ENCODE measurements at regions of chr15 and their contacts with region 1.

Region 1: DNA sequence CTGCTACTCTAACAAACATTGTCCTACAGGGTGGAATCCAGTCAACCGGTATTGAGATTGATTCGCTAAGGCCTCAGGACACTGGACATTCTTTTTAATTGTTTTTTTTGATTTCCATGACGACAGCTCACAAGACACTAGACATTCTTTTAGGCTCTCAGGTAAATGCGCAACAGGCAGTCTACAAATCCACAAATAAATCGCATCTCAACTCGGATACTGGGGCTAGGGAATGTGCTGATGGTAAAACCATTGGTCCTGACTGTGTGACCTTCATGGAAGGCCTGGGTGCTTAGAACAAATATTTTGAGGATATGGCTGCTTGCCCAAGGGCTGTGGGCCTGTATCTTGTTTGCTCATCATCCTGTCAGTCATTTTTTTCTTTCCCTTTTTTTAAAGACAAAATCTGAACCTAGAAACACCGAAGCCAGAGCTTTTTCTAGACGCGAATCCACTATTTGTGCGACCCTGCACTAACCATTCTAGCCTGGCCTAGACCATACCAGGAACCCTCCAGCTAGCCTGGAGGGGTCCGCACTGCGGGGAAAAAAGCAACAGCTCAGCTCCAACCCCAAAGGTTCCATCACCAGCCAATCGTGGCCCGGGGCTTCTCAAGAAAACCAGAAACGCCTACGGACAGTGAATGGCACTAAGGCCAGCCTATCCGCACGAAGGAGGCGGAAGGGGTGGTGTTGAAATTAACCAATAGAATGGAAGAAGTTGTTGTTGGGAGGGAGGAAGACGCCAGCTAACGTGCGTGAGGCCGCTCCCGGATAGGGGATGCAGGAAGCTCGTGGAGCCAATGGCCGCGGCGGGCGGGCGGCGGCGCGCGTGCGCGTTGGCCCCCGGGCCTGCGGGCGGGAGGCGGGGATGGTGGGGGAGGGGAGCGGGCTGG is 18.1 kb upstream of the CHD2 start:
- DNase-seq: peak; percentile 99

Region 2: DNA sequence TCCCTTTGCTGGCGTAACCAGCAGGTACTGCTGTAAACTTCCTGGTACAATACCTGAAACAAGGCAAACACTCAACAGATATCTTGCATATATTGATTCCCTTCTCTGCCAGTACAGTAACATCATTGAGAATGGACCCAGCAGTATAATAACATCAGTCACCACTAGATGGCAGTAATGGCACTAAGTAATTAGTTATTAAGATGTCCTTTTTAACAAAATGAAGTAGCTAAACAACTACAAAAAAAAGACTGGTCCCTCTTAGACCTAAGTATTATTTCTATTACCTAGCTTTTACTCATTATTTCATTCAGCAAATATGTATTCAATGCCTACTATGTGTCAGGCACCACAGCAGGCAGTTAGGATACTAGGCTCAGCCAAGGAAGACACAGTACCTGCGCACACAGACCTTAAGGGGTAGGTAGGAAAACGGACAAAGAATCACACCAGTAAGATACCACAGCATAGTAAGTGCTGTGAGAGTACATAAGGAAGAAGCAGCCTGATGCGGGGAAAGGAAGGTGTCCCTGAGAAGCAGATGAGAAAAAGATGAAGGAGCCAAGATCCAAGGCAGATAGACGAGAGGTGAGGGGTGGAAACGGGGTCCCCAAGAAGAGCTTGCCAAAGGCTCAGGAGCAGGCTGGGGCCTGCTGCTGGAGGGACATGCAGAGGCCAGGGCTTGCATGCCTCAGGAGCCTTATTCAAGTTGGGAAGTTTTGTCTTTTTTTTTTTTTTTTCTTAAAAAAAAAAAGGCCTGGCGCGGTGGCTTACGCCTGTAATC is 84.7 kb before region 1 on chr15:
- CTCF ChIA-PET with region 1: interaction called, 12 read pairs
- POLR2A ChIA-PET with region 1: interaction called, 55 read pairs
- DNase-seq: peak; percentile 59

Region 3: DNA sequence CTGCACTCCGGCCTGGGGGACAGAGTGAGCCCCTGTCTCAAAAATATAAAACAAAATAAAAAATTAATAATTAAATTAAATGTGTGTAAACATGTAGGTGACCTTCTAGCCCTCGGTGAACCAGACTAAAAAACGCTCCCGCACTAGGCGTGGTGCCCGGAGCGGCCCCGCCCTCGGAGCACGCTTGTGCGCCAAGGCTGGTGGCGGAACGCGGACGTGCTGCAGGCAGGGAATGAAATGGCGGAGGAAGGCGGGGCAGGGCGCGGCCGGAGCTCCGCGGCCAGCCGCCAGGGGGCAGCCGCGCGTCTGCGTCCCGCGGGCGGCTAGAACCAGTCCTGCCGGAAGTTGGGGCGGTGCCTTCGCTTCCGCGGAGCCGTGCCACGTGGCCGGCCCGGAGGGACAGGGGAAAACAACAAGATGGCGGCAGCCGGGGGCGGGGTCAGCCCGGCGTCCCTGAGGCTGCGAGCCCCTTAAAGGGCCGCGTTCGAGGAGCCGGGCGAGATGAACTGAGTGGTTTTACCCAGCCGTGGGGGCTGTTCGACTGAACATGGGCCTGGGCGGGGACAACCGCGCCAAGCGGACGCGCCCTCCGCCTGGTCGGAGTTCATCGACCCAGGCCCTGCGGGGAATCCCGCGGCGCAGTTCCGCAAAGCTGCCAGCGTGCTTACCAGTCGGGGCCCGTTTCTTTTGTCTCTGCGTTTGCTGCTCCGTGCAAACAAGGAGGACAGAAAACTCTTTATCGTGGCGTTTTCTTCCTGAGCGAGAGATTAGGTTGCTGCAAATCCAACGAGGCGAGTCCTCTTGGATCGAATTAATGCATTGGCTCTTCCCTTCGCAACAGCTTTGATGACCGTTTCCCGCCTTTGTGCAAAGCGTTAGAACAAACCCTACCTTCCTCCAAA is 72.8 kb before region 1 on chr15:
- CTCF ChIA-PET with region 1: interaction called, 7 read pairs
- POLR2A ChIA-PET with region 1: interaction called, 191 read pairs
- DNase-seq: peak; percentile 96

Region 4: GRCh38 chr15:92831655-92832328 is 50.3 kb before region 1 on chr15:
- CTCF ChIA-PET with region 1: interaction called, 3 read pairs
- POLR2A ChIA-PET with region 1: interaction called, 172 read pairs
- DNase-seq: peak; percentile 90

Region 5: GRCh38 chr15:92853222-92853621 is 28.8 kb before region 1 on chr15:
- CTCF ChIA-PET with region 1: interaction called, 7 read pairs
- POLR2A ChIA-PET with region 1: interaction called, 24 read pairs
- DNase-seq: no peak

Region 6: DNA sequence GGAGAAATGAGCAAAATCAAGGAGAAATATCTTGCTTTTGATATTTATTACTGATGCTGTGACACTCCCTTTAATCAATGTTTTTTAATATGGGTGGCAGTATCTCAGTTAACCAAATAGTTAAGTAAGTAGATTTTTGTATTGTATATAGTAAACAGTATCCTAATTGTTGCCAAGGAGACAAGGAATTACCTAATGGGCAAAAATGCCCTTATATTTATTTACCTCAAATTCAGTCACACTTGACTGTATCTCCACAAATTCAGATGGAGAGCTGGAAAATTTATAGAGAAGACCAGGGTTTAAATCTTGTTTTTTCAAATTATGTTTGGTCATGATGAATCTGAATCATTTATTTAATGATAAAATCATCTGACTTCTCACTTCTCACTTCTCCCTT is 14.5 kb after region 1 on chr15:
- CTCF ChIA-PET with region 1: interaction called, 4 read pairs
- POLR2A ChIA-PET with region 1: interaction called, 252 read pairs
- DNase-seq: no peak

Region 7: DNA sequence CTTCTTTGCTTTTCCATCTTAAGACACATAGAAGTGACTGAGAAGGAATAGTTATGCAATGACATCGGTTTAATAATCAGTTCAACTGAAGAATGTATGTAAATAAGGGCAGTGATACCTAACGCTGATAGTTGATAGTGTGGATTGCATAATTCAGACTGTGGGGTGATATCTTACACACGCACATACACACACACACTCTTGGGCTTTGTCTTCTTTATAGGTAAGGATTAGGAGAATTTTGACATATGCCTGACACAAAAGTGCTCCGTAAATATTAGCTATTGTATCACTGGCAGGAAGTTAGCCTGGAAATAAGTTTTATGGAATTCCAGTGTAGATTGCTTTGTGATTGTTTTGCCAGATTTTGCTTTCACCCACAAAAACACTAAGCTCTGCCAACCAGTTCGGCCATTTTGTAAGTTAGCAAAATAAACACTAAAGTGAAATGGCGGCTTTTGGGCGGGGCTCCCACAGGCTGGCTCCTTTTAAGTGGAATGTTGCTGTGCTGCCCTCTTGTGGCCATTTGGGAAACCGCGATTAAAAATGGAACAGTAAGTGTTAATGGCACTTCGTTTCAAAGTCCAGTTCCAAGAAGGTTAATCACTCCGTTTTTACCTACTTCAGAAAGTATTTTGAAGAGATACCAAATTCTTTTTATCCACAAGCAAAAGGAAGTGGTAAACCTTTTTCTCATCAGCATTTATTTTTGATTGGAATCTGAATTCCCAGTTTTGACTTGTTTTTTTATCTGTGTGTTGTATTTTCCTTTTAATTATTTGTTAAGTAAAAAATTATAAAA is 35.8 kb after region 1 on chr15:
- CTCF ChIA-PET with region 1: interaction called, 7 read pairs
- POLR2A ChIA-PET with region 1: interaction called, 20 read pairs
- DNase-seq: peak; percentile 77

Measured in HEK293T (cell line).